Calu3 (cell line): ENCODE measurements at regions of chr17 and their contacts with region 1.

Region 1: GRCh38 chr17:77542551-77543490 is 402.1 kb downstream of the SEC14L1 start:
- DNase-seq: peak; percentile 67
- H3K4me3 Mint-ChIP-seq: no peak overlapping the region
- H3K27ac Mint-ChIP-seq: no peak overlapping the region
- H3K4me1 Mint-ChIP-seq: no peaks in the 10 kb centered on the region
- H3K27me3 Mint-ChIP-seq: peaks cover 74% of the 10 kb centered on the region
- CTCF ChIP-seq: peak; percentile 72

Region 2: DNA sequence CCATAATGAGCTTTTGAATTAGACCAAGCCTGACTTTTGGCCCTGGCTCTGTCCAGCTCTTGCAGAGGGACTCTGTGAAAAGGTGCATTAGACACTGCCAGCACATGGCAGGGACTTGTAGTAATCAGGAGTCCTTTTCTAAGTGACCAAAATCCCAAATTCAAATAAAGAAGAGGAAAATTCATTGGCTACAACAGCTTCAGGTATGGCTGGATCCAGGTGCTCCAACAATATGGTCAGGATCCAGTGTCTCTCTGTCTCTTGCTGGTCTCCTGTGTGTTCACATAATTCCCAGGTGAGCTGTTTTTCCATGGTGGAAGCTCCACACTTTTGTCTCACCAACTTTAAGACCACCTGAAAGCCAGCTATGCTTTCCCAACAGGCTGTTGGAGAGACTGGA is 56.9 kb after region 1 on chr17:
- CTCF ChIA-PET with region 1: interaction called, 10 read pairs
- intact Hi-C with region 1: no loop called
- DNase-seq: no peak
- H3K4me3 Mint-ChIP-seq: no peak overlapping the region
- H3K27ac Mint-ChIP-seq: no peak overlapping the region
- H3K4me1 Mint-ChIP-seq: no peaks in the 10 kb centered on the region
- H3K27me3 Mint-ChIP-seq: peaks cover 97% of the 10 kb centered on the region
- CTCF ChIP-seq: no peak

Region 3: GRCh38 chr17:77666881-77667395 is 124.1 kb after region 1 on chr17:
- CTCF ChIA-PET with region 1: no interaction called
- intact Hi-C with region 1: loop called (anchors 5 kb)
- DNase-seq: no peak
- H3K4me3 Mint-ChIP-seq: no peak overlapping the region
- H3K27ac Mint-ChIP-seq: no peak overlapping the region
- H3K4me1 Mint-ChIP-seq: no peaks in the 10 kb centered on the region
- H3K27me3 Mint-ChIP-seq: peaks cover 88% of the 10 kb centered on the region
- CTCF ChIP-seq: no peak

Region 4: GRCh38 chr17:78013683-78014467 is 471.1 kb after region 1 on chr17:
- CTCF ChIA-PET with region 1: interaction called, 4 read pairs
- intact Hi-C with region 1: loop called (anchors 10 kb)
- DNase-seq: peak; percentile 16
- H3K4me3 Mint-ChIP-seq: no peak overlapping the region
- H3K27ac Mint-ChIP-seq: no peak overlapping the region
- H3K4me1 Mint-ChIP-seq: no peaks in the 10 kb centered on the region
- H3K27me3 Mint-ChIP-seq: no peaks in the 10 kb centered on the region
- CTCF ChIP-seq: no peak